GM10248 (cell line): ENCODE measurements at regions of chr9 and their contacts with region 1.

Region 1: GRCh38 chr9:137240861-137241489 is at the start of gene TUBB4B:
- DNase-seq: peak; percentile 99
- CTCF ChIP-seq: no peak

Region 2: DNA sequence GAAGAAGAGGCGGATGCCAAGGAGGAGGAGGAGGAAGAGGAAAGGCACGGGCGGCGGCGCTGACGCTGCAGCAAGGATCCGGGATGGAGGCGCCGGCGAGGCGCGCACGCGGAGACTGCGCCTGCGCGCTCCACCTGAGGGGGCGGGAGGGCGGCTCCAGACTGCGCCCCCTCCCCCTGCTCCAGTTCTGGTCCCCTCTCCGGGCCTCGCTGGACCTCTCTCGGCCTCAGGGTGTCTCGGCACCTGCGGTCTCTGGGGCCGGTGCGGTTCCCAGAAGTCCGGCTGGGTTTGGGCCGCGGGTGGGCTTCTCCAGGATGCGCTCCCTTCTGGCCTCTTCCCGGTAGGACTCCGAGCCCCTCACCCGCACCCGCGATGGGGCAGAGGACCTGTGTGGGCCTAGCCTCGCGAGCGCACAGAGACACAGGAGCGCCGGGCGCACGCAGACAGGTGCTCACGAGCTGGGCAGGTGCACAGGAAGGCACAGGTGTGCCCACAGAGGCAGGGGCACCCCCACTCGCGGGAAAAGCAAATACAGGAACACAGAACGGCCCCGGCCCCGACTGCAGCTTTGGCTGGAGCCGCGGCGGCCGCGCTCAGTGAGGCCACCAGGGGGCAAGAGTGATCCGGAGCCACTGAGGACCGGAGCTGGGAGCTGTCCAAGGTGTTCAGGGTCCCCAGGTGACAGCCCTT is 194.7 kb before region 1 on chr9 and contains the start of gene NPDC1:
- CTCF ChIA-PET with region 1: interaction called, 10 read pairs
- POLR2A ChIA-PET with region 1: interaction called, 7 read pairs
- DNase-seq: peak; percentile 93
- CTCF ChIP-seq: peak; percentile 94

Region 3: DNA sequence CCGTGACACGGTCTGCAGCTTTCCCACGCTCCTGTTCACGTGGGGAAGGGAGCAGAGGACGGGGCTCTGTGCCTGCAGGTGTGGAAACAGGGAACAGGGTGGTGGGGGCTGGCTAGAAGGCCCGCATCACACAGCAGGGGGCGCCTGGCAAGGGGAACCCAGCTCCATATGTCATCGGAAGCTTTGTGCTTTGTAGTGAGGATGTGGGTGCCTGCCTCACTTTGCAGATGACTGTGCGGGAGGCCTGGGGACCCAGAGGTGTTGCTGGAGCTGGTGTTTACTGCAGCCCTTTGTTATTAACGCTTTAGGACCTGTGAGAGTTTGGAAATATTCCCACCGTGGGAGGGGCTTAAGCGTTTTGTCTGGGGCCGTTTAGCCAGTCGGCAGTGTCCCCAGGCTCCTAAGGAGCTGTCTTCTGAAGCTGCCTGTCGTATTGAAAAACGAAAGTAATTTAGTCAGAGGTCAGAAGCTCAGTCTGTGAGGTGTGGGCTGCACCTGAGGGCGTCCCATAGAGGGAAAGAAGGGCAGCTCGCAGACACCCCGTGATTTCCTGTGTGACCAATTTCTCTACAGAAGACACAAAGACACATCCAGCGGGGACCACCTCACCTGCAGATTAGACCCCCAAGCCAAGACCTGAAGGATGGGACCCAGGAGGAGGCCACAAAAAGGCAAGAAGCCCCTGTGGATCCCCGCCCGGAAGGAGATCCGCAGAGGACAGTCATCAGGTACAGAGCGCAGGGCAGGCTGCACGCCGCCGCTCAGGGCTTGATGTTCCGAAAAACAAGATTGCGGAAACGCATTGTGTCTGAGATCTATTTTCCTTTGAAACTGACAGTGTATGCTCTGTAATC is 145.1 kb before region 1 on chr9:
- CTCF ChIA-PET with region 1: interaction called, 19 read pairs
- POLR2A ChIA-PET with region 1: interaction called, 13 read pairs
- DNase-seq: peak; percentile 87
- CTCF ChIP-seq: peak; percentile 71

Region 4: GRCh38 chr9:137129456-137130175 is 111.4 kb before region 1 on chr9:
- CTCF ChIA-PET with region 1: interaction called, 13 read pairs
- POLR2A ChIA-PET with region 1: interaction called, 9 read pairs
- DNase-seq: peak; percentile 93
- CTCF ChIP-seq: no peak

Region 5: DNA sequence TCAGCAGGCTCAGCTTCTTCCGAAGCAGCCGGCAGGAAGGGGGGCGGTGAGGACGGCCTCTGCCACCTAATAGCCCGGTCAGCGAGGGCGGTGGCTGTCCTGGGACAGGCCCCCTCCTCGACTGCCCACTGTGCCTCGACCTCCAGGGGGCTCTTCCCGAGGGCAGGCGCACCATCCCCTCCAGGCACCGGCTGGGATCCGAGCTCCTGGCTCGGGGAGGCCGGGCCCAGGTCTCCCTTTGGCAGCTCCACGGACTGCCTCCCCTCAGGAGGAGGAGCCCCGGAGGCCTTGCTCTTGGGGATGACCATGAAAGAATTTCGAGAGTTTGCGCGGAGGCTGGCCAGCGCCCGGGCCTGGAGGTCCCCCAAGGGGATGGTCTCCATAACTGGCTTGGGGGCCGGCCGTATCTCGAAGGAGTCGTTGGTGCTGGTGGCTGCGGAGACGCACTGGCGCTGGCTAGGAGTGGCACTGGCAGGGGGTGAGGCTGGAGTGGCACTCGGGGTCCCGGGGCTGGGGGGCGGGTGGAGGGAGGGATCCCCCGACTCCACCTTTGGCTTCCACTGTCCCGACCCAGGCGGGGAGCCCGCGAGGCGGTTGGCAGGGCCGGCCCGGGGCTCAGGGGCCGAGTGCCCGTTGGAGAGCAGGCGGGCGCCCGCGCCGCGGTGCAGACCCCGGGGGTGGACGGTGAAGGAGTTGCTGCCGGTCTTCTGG is 41.4 kb before region 1 on chr9:
- CTCF ChIA-PET with region 1: interaction called, 13 read pairs
- POLR2A ChIA-PET with region 1: interaction called, 7 read pairs
- DNase-seq: no peak
- CTCF ChIP-seq: no peak

Region 6: GRCh38 chr9:137254624-137255447 is 13.9 kb after region 1 on chr9 and contains the start of gene NELFB:
- CTCF ChIA-PET with region 1: interaction called, 17 read pairs
- POLR2A ChIA-PET with region 1: interaction called, 124 read pairs
- DNase-seq: peak; percentile 100
- CTCF ChIP-seq: no peak

Region 7: GRCh38 chr9:137482094-137482781 is 241.3 kb after region 1 on chr9:
- CTCF ChIA-PET with region 1: no interaction called
- POLR2A ChIA-PET with region 1: no interaction called
- DNase-seq: no peak
- CTCF ChIP-seq: no peak